ENCODE measurements at regions of chr7 and their contacts with region 1.

Region 1: GRCh38 chr7:100132697-100133151 is 6.0 kb downstream of the MBLAC1 start:
- DNase-seq: peak in 8 of 9 donors; percentile 53 to 77 (median 64)
- ATAC-seq: peak; percentile 89
- H3K4me3 ChIP-seq: no peak overlapping the region
- H3K4me3 Mint-ChIP-seq: no peak overlapping the region
- H3K27ac ChIP-seq: no peak overlapping the region
- H3K27ac Mint-ChIP-seq: peak overlapping the region in 7 of 9 donors; percentile 24 to 73 (median 49)
- H3K4me1 ChIP-seq: peaks cover 13 to 24% of the 10 kb centered on the region in 2 donors
- H3K4me1 Mint-ChIP-seq: peaks cover 4 to 31% (median 23%) of the 10 kb centered on the region in 7 donors
- H3K27me3 ChIP-seq: no peaks in the 10 kb centered on the region
- H3K27me3 Mint-ChIP-seq: no peaks in the 10 kb centered on the region

Region 2: GRCh38 chr7:99531354-99531765 is 601.4 kb before region 1 on chr7:
- CTCF ChIA-PET with region 1: no interaction called
- POLR2A ChIA-PET with region 1: no interaction called
- intact Hi-C with region 1: no loop called
- DNase-seq: no peak
- ATAC-seq: no peak
- H3K4me3 ChIP-seq: no peak overlapping the region
- H3K4me3 Mint-ChIP-seq: no peak overlapping the region
- H3K27ac ChIP-seq: no peak overlapping the region
- H3K27ac Mint-ChIP-seq: no peak overlapping the region
- H3K4me1 ChIP-seq: no peaks in the 10 kb centered on the region
- H3K4me1 Mint-ChIP-seq: no peaks in the 10 kb centered on the region
- H3K27me3 ChIP-seq: no peaks in the 10 kb centered on the region
- H3K27me3 Mint-ChIP-seq: no peaks in the 10 kb centered on the region

Region 3: DNA sequence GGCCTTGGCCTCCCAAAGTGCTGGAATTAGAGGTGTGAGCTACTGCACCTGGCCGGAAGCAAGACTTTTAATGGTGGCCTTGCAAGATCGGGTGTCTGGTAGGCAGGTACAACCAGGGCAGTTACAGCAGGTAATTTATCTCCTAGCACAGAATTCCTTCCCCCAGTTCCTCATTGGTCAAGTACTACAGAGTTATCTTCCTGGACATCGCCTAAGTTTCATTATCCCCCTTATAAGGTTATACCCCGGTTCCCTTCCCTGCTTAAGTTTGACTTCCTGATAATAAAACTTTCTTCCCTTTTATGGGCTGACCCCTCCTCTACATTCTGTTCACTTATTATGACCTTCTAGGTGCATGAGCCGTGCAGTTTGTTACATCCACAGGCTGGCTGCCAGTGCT is 324.0 kb before region 1 on chr7:
- CTCF ChIA-PET with region 1: no interaction called
- POLR2A ChIA-PET with region 1: no interaction called
- intact Hi-C with region 1: no loop called
- DNase-seq: no peak
- ATAC-seq: no peak
- H3K4me3 ChIP-seq: no peak overlapping the region
- H3K4me3 Mint-ChIP-seq: no peak overlapping the region
- H3K27ac ChIP-seq: no peak overlapping the region
- H3K27ac Mint-ChIP-seq: no peak overlapping the region
- H3K4me1 ChIP-seq: no peaks in the 10 kb centered on the region
- H3K4me1 Mint-ChIP-seq: no peaks in the 10 kb centered on the region
- H3K27me3 ChIP-seq: no peaks in the 10 kb centered on the region
- H3K27me3 Mint-ChIP-seq: peaks cover 19 to 43% (median 26%) of the 10 kb centered on the region in 5 donors

Region 4: DNA sequence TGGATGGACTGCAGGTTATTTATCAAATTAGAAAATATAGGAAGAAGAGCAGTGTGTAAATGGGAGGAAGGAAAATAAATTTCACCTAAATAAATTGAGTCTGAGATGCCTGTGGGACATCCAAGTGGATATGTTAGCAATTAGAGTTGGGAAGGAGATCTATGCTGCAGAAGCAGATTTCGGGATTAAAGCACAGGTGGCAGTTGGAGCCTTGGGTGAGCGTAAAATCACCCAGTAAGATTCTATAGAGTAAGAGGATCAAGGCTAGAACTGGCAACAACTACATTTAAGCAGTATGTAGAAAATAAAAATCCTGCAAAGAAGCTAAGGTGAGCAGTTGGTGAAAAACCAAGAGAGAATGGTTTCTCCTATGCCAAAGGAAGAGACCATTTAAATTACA is 221.7 kb before region 1 on chr7:
- CTCF ChIA-PET with region 1: interaction called, 8 read pairs
- POLR2A ChIA-PET with region 1: interaction called, 4 read pairs
- intact Hi-C with region 1: loop called (anchors 1 to 2 kb)
- DNase-seq: no peak
- ATAC-seq: no peak
- H3K4me3 ChIP-seq: no peak overlapping the region
- H3K4me3 Mint-ChIP-seq: peak overlapping the region in 4 of 10 donors; percentile 17 to 49 (median 35)
- H3K27ac ChIP-seq: no peak overlapping the region
- H3K27ac Mint-ChIP-seq: peak overlapping the region in 3 of 9 donors; percentile 28 to 71 (median 64)
- H3K4me1 ChIP-seq: peaks cover 6 to 13% of the 10 kb centered on the region in 2 donors
- H3K4me1 Mint-ChIP-seq: peaks cover 22 to 82% (median 68%) of the 10 kb centered on the region in 7 donors
- H3K27me3 ChIP-seq: no peaks in the 10 kb centered on the region
- H3K27me3 Mint-ChIP-seq: no peaks in the 10 kb centered on the region

Region 5: GRCh38 chr7:100081535-100082102 is 51.1 kb before region 1 on chr7 and contains the start of gene ZNF3:
- CTCF ChIA-PET with region 1: interaction called, 6 read pairs
- POLR2A ChIA-PET with region 1: interaction called, 5 read pairs
- intact Hi-C with region 1: loop called (anchors 1 to 2 kb)
- DNase-seq: peak; percentile 87 to 98 (median 97)
- ATAC-seq: peak; percentile 94
- H3K4me3 ChIP-seq: peak within 1 kb of the TSS; percentile 78
- H3K4me3 Mint-ChIP-seq: peak within 1 kb of the TSS; percentile 89 to 96 (median 92)
- H3K27ac ChIP-seq: peak within 1 kb of the TSS; percentile 82
- H3K27ac Mint-ChIP-seq: peak within 1 kb of the TSS; percentile 64 to 98 (median 91)
- H3K4me1 ChIP-seq: peaks cover 5 to 18% of the 10 kb centered on the region in 2 donors
- H3K4me1 Mint-ChIP-seq: peaks cover 26 to 46% (median 41%) of the 10 kb centered on the region in 7 donors
- H3K27me3 ChIP-seq: no peaks in the 10 kb centered on the region
- H3K27me3 Mint-ChIP-seq: peaks cover 0 to 19% (median 0%) of the 10 kb centered on the region in 5 donors
- total RNA-seq, gene ZNF3: 29.1 to 48.0 (median 35.0) TPM

Region 6: GRCh38 chr7:100158229-100159098 is 25.7 kb after region 1 on chr7 and contains the start of gene TRAPPC14:
- CTCF ChIA-PET with region 1: interaction called, 18 read pairs
- POLR2A ChIA-PET with region 1: interaction called, 7 read pairs
- intact Hi-C with region 1: no loop called
- DNase-seq: peak; percentile 79 to 95 (median 88)
- ATAC-seq: peak; percentile 93
- H3K4me3 ChIP-seq: peak within 1 kb of the TSS; percentile 79
- H3K4me3 Mint-ChIP-seq: peak within 1 kb of the TSS; percentile 83 to 93 (median 88)
- H3K27ac ChIP-seq: peak within 1 kb of the TSS; percentile 88
- H3K27ac Mint-ChIP-seq: peak within 1 kb of the TSS; percentile 77 to 98 (median 89)
- H3K4me1 ChIP-seq: peaks cover 13 to 35% of the 10 kb centered on the region in 2 donors
- H3K4me1 Mint-ChIP-seq: peaks cover 39 to 81% (median 66%) of the 10 kb centered on the region in 7 donors
- H3K27me3 ChIP-seq: no peaks in the 10 kb centered on the region
- H3K27me3 Mint-ChIP-seq: no peaks in the 10 kb centered on the region
- total RNA-seq, gene TRAPPC14: 51.8 to 102 (median 70.2) TPM

Region 7: GRCh38 chr7:100190048-100190711 is 57.5 kb after region 1 on chr7:
- CTCF ChIA-PET with region 1: interaction called, 34 read pairs
- POLR2A ChIA-PET with region 1: interaction called, 8 read pairs
- intact Hi-C with region 1: loop called in 1 of 2 experiments (anchors 1 kb)
- DNase-seq: peak in 7 of 9 donors; percentile 36 to 66 (median 56)
- ATAC-seq: peak; percentile 86
- H3K4me3 ChIP-seq: no peak overlapping the region
- H3K4me3 Mint-ChIP-seq: peak overlapping the region in 3 of 10 donors; percentile 12 to 18 (median 15)
- H3K27ac ChIP-seq: peak overlapping the region; percentile 15
- H3K27ac Mint-ChIP-seq: peak overlapping the region in 8 of 9 donors; percentile 19 to 90 (median 76)
- H3K4me1 ChIP-seq: peaks cover 0 to 22% of the 10 kb centered on the region in 2 donors
- H3K4me1 Mint-ChIP-seq: peaks cover 16 to 56% (median 50%) of the 10 kb centered on the region in 7 donors
- H3K27me3 ChIP-seq: no peaks in the 10 kb centered on the region
- H3K27me3 Mint-ChIP-seq: no peaks in the 10 kb centered on the region

Region 8: GRCh38 chr7:100221231-100221718 is 88.6 kb after region 1 on chr7:
- CTCF ChIA-PET with region 1: interaction called, 84 read pairs
- POLR2A ChIA-PET with region 1: interaction called, 10 read pairs
- intact Hi-C with region 1: loop called (anchors 1 kb)
- DNase-seq: peak; percentile 33 to 90 (median 87)
- ATAC-seq: peak; percentile 79
- H3K4me3 ChIP-seq: peak overlapping the region; percentile 81
- H3K4me3 Mint-ChIP-seq: peak overlapping the region; percentile 81 to 99 (median 97)
- H3K27ac ChIP-seq: peak overlapping the region; percentile 99
- H3K27ac Mint-ChIP-seq: peak overlapping the region; percentile 96 to 100 (median 99)
- H3K4me1 ChIP-seq: peaks cover 38 to 45% of the 10 kb centered on the region in 2 donors
- H3K4me1 Mint-ChIP-seq: peaks cover 35 to 74% (median 66%) of the 10 kb centered on the region in 7 donors
- H3K27me3 ChIP-seq: no peaks in the 10 kb centered on the region
- H3K27me3 Mint-ChIP-seq: no peaks in the 10 kb centered on the region

Region 9: DNA sequence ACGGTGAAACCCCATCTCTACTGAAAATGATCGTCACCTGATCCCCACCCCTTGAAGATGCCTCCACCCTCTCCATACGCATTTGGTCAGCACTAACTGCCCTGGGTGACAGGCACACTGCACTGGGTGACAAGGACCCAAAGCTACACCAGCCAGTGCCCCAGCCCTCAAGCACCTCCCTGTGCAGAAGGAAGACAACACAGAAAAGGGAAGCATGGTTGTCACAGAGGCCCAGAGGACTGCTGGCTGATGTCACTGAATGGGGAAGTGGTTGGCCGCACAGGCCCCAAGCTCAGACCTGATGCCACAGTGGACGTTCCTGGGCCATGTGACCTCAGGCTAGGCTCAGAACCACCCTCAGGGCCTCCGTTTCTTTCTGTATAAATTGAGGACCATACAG is 236.4 kb after region 1 on chr7:
- CTCF ChIA-PET with region 1: no interaction called
- POLR2A ChIA-PET with region 1: no interaction called
- intact Hi-C with region 1: no loop called
- DNase-seq: no peak
- ATAC-seq: peak; percentile 85
- H3K4me3 ChIP-seq: no peak overlapping the region
- H3K4me3 Mint-ChIP-seq: peak overlapping the region in 1 of 10 donors; percentile 22
- H3K27ac ChIP-seq: peak overlapping the region; percentile 25
- H3K27ac Mint-ChIP-seq: peak overlapping the region in 6 of 9 donors; percentile 50 to 82 (median 66)
- H3K4me1 ChIP-seq: peaks cover 0 to 8% of the 10 kb centered on the region in 2 donors
- H3K4me1 Mint-ChIP-seq: peaks cover 13 to 45% (median 31%) of the 10 kb centered on the region in 7 donors
- H3K27me3 ChIP-seq: no peaks in the 10 kb centered on the region
- H3K27me3 Mint-ChIP-seq: no peaks in the 10 kb centered on the region

Region 10: DNA sequence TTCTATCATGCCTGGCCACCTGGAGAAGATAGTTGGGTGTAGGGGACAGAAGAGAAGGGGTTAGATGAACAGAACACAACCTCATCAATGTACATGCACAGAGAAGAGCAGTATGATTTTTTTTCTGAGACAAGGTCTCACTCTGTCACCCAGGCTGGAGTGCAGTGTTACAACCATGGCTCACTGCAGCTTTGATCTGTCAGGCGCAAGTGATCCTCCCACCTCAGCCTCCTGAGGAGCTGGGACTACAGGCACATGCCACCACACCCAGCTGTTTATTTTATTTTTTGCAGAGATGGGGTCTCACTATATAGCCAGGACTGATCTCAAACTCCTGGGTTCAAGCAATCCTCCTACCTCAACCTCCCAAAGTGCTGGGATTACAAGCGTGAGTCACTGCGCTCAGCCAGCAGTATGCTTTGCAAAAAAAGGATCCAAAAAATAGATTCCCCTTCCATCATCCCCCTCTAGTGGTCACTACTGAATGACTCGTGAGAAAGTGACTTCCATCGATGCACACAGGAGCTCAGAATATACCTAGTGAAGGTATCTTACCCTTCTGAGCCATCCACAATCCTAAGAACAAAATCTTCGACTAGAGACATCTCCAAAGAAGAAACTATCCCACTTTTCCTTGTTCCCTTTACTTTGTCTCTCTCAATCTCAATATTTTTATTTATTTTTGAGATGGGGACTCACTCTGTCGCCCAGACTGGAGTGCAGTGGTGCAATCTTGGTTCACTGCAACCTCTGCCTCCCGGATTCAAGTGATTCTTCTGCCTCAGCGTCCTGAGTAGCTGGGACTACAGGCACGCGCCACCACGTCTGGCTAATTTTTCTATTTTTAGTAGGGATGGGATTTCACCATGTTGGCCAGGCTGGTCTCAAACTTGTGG is 274.8 kb after region 1 on chr7:
- CTCF ChIA-PET with region 1: interaction called, 13 read pairs
- POLR2A ChIA-PET with region 1: no interaction called
- intact Hi-C with region 1: loop called (anchors 1 kb)
- DNase-seq: peak in 7 of 9 donors; percentile 35 to 69 (median 53)
- ATAC-seq: peak; percentile 97
- H3K4me3 ChIP-seq: no peak overlapping the region
- H3K4me3 Mint-ChIP-seq: no peak overlapping the region
- H3K27ac ChIP-seq: no peak overlapping the region
- H3K27ac Mint-ChIP-seq: peak overlapping the region in 1 of 9 donors; percentile 65
- H3K4me1 ChIP-seq: no peaks in the 10 kb centered on the region
- H3K4me1 Mint-ChIP-seq: peaks cover 0 to 5% (median 2%) of the 10 kb centered on the region in 7 donors
- H3K27me3 ChIP-seq: no peaks in the 10 kb centered on the region
- H3K27me3 Mint-ChIP-seq: peaks cover 0 to 32% (median 0%) of the 10 kb centered on the region in 5 donors

Region 11: DNA sequence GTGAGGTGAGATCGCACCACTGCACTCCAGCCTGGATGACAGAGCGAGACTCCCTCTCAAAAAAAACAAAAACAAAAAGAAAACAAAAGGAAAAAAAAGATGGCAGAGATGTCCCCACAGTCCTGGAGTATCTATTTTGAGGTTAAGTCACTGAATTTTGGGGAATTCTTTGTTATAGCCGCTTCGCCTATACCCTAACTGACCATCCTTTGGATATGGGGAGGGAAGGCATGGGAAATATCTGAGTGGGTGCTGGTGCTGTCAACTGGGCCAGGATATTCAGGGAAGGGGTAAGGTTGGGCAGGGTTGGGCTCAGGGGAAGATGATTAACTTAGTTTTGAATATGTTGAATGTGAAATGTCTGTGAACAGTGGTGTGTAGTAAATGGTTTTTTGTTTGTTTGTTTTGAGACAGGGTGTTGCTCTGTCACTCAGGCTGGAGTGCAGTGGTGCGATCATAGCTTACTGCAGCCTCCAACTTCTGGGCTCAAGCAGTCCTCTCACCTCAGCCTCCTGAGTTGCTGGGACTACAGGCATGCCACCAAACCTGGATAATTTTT is 532.5 kb after region 1 on chr7:
- CTCF ChIA-PET with region 1: no interaction called
- POLR2A ChIA-PET with region 1: no interaction called
- intact Hi-C with region 1: no loop called
- DNase-seq: no peak
- ATAC-seq: no peak
- H3K4me3 ChIP-seq: no peak overlapping the region
- H3K4me3 Mint-ChIP-seq: no peak overlapping the region
- H3K27ac ChIP-seq: no peak overlapping the region
- H3K27ac Mint-ChIP-seq: no peak overlapping the region
- H3K4me1 ChIP-seq: no peaks in the 10 kb centered on the region
- H3K4me1 Mint-ChIP-seq: peaks cover 0 to 10% (median 0%) of the 10 kb centered on the region in 7 donors
- H3K27me3 ChIP-seq: no peaks in the 10 kb centered on the region
- H3K27me3 Mint-ChIP-seq: peaks cover 0 to 24% (median 5%) of the 10 kb centered on the region in 5 donors